Activated CD4-positive, alpha-beta T cell treated with anti-CD3 and anti-CD28 coated beads for 36 hours (primary cell): ENCODE measurements at regions of chr1 and their contacts with region 1.

Region 1: DNA sequence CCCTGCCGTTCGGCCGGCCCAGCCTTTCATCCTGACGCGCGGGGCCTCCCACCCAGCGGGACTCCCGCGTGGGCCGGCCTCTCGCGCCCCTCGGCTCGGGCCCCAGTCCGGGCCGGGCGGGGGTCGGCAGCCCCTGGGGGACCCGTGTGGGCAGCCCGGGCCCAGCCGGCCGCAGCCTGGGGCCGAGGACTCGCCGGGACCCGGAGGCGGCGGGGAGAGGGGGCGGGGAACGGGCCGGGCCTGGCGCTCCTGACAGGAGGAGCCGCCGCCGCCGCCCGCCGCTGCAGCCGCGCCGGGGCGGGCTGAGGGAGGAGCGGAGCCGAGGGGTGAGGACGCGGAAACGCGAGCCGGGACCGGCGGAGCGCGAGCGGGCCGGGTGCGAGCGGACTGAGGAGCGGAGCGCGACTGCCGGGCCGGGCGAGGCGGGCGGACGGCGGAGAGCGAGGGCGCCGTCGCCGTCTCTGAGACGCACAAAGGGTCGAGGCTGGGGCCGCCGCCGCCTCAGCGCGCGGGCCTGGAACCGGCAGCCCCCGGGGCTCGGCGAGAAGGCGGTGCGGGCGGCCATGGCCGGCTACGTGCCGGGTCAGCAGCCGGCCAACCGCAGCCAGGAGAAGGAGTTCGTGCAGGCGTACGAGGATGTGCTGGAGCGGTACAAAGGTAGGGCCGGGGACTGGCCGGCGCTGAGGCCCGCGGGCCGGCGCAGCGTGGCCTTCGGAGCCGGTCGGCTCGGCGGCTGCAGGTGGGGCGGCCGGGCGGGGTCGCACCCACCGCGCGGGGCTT is 79.1 kb downstream of the NDUFS5 start:
- DNase-seq: peak; percentile 77
- ATAC-seq: peak; percentile 75
- H3K4me3 Mint-ChIP-seq: no peak overlapping the region
- H3K27ac Mint-ChIP-seq: no peak overlapping the region
- H3K4me1 Mint-ChIP-seq: peaks cover 40% of the 10 kb centered on the region
- H3K27me3 Mint-ChIP-seq: peaks cover 8% of the 10 kb centered on the region

Region 2: GRCh38 chr1:39491146-39491921 is 386.1 kb after region 1 on chr1 and contains the start of gene BMP8A:
- CTCF ChIA-PET with region 1: no interaction called
- POLR2A ChIA-PET with region 1: no interaction called
- intact Hi-C with region 1: loop called in 1 of 2 experiments (anchors 2 kb)
- DNase-seq: peak; percentile 83
- ATAC-seq: peak; percentile 92
- H3K4me3 Mint-ChIP-seq: peak within 1 kb of the TSS; percentile 43
- H3K27ac Mint-ChIP-seq: no peak within 1 kb of the TSS
- H3K4me1 Mint-ChIP-seq: peaks cover 4% of the 10 kb centered on the region
- H3K27me3 Mint-ChIP-seq: peaks cover 16% of the 10 kb centered on the region
- total RNA-seq, gene BMP8A: 0.16 TPM in 1 of 2 experiments, not detected in the other